B cell (primary cell): ENCODE measurements at regions of chr17 and their contacts with region 1.

Region 1: GRCh38 chr17:48678141-48678971 is 44.0 kb downstream of the PRAC1 start:
- DNase-seq: peak; percentile 78
- ATAC-seq: peak; percentile 81
- H3K4me3 ChIP-seq: no peak overlapping the region
- H3K4me3 Mint-ChIP-seq: no peak overlapping the region
- H3K27ac ChIP-seq: no peak overlapping the region
- H3K27ac Mint-ChIP-seq: no peak overlapping the region
- H3K4me1 ChIP-seq: peaks cover 0 to 9% of the 10 kb centered on the region in 2 donors
- H3K4me1 Mint-ChIP-seq: peaks cover 2% of the 10 kb centered on the region
- H3K27me3 ChIP-seq: peaks cover 0 to 41% (median 18%) of the 10 kb centered on the region in 4 experiments
- H3K27me3 Mint-ChIP-seq: peaks cover 49% of the 10 kb centered on the region
- CTCF ChIP-seq: peak; percentile 97

Region 2: GRCh38 chr17:46922804-46923635 is 1755.3 kb before region 1 on chr17 and contains the start of gene GOSR2:
- CTCF ChIA-PET with region 1: no interaction called
- POLR2A ChIA-PET with region 1: no interaction called
- intact Hi-C with region 1: no loop called
- DNase-seq: peak; percentile 98
- ATAC-seq: peak; percentile 94
- H3K4me3 ChIP-seq: peak within 1 kb of the TSS; percentile 87 to 98 (median 97)
- H3K4me3 Mint-ChIP-seq: peak within 1 kb of the TSS; percentile 98
- H3K27ac ChIP-seq: peak within 1 kb of the TSS; percentile 94 to 98
- H3K27ac Mint-ChIP-seq: peak within 1 kb of the TSS; percentile 100
- H3K4me1 ChIP-seq: peaks cover 16% of the 10 kb centered on the region in 2 donors
- H3K4me1 Mint-ChIP-seq: peaks cover 55% of the 10 kb centered on the region
- H3K27me3 ChIP-seq: no peaks in the 10 kb centered on the region
- H3K27me3 Mint-ChIP-seq: no peaks in the 10 kb centered on the region
- CTCF ChIP-seq: no peak
- total RNA-seq, gene GOSR2: 91.0 and 95.2 TPM in 2 replicates

Region 3: DNA sequence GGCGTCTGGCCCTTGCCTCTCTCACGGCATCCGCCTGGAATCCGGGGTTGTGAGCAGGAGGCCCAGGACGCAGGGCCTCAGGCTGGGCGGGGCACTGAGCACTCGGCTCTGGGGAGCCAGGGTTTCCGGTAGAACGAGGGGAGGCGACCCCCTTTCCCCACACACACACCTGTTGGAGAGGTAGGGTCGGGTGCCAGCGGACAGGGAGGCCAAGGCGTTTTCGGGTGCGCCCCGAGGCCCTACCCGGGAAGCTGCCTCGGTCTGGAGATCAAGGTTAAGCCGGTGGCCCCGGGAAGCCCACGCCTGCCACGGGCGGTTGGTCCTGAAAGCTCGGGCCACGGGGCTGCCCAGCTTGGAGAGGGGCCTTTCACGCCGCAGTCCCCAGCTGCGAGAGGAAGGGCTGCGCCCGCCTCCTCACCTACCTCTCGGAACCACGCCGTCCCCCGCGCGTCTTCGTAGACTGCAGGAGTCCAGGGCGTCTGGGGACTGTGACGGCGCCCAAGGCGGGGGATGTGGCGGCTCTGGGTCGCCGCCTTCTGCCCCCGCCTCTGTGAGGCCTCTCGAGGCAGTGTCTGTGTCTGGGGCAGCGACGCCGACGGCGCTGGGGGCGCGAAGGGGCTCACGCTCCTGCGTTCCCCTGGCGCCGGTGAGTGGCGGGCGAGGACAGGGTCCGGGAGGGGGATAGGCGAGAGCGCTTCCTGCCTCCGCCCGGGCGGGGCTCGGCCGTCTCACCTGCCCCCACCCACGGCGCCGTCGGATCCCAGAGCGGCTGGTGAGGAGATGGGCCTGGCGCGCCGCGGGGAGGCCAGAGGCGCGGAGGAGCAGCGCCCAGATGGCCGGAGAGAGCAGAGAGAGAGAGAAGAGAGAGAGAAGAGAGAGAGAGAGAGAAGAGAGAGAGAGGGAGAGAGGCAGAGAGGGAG is 31.9 kb before region 1 on chr17:
- CTCF ChIA-PET with region 1: no interaction called
- POLR2A ChIA-PET with region 1: no interaction called
- intact Hi-C with region 1: no loop called
- DNase-seq: peak; percentile 43
- ATAC-seq: peak; percentile 53
- H3K4me3 ChIP-seq: peak overlapping the region in 3 of 5 experiments; percentile 61 to 71 (median 69)
- H3K4me3 Mint-ChIP-seq: peak overlapping the region; percentile 83
- H3K27ac ChIP-seq: no peak overlapping the region
- H3K27ac Mint-ChIP-seq: no peak overlapping the region
- H3K4me1 ChIP-seq: peaks cover 33 to 34% of the 10 kb centered on the region in 2 donors
- H3K4me1 Mint-ChIP-seq: peaks cover 31% of the 10 kb centered on the region
- H3K27me3 ChIP-seq: peaks cover 0 to 68% (median 40%) of the 10 kb centered on the region in 4 experiments
- H3K27me3 Mint-ChIP-seq: peaks cover 63% of the 10 kb centered on the region
- CTCF ChIP-seq: no peak

Region 4: DNA sequence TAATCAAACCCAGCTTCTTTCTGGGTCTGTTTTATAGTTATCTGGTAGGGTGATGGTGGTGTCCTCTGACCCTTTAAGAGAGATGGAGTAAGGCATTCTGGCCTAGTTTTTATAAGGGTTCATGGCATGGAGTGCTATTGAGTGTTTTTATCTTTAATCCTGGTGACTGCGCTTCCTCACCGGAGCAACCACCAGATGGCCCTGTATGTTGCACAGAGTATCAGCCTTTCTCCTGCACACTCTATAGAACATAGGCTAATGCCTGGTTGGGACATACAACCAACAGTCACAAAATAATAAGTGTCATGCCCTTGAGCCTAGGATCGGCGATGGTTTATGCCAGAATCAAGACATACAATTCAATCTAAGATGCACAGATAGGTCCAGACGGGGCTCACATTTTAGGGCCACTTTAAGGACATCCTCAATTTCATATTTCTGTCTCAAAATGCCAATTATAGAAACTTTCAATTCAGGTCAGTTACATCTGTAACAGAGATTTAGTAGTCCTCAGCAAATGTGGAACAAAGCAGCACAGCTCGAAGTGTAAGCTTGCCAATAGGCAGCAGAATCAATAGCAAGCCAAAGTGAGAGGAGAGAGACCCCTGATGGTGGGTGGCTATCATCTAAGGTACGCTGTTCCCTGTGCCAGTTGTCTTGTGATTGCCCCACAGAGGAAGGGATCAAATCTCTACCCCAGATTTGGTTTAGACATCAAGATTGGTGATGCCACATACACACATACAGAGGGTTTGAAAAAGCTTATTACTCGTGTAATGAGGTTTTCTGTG is 15.0 kb before region 1 on chr17:
- CTCF ChIA-PET with region 1: interaction called, 11 read pairs
- POLR2A ChIA-PET with region 1: no interaction called
- intact Hi-C with region 1: no loop called
- DNase-seq: no peak
- ATAC-seq: no peak
- H3K4me3 ChIP-seq: no peak overlapping the region
- H3K4me3 Mint-ChIP-seq: no peak overlapping the region
- H3K27ac ChIP-seq: no peak overlapping the region
- H3K27ac Mint-ChIP-seq: no peak overlapping the region
- H3K4me1 ChIP-seq: no peaks in the 10 kb centered on the region
- H3K4me1 Mint-ChIP-seq: no peaks in the 10 kb centered on the region
- H3K27me3 ChIP-seq: peaks cover 0 to 13% (median 4%) of the 10 kb centered on the region in 4 experiments
- H3K27me3 Mint-ChIP-seq: peaks cover 44% of the 10 kb centered on the region
- CTCF ChIP-seq: no peak

Region 5: DNA sequence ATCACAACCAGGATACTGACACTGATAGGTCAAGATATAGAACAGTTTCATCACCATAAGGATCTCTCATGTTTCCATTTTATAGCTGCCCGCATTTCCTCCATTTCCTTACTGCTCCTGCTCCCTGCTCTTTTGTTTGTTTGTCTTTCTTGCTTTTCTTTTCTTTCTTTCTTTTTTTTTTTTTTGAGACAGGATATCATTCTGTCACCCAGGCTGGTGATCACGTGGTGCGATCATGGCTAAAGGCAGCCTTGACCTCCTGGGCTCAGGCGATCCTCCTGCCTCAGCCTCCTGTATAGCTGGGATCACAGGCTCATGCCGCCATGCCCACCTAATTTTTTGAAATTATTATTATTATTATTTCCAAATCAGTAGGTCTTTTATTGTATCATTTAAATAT is 12.3 kb after region 1 on chr17:
- CTCF ChIA-PET with region 1: interaction called, 29 read pairs
- POLR2A ChIA-PET with region 1: no interaction called
- intact Hi-C with region 1: no loop called
- DNase-seq: no peak
- ATAC-seq: no peak
- H3K4me3 ChIP-seq: no peak overlapping the region
- H3K4me3 Mint-ChIP-seq: no peak overlapping the region
- H3K27ac ChIP-seq: no peak overlapping the region
- H3K27ac Mint-ChIP-seq: no peak overlapping the region
- H3K4me1 ChIP-seq: no peaks in the 10 kb centered on the region
- H3K4me1 Mint-ChIP-seq: no peaks in the 10 kb centered on the region
- H3K27me3 ChIP-seq: peaks cover 0 to 9% (median 4%) of the 10 kb centered on the region in 4 experiments
- H3K27me3 Mint-ChIP-seq: peaks cover 21% of the 10 kb centered on the region
- CTCF ChIP-seq: no peak

Region 6: GRCh38 chr17:48791128-48792032 is 113.0 kb after region 1 on chr17:
- CTCF ChIA-PET with region 1: interaction called, 15 read pairs
- POLR2A ChIA-PET with region 1: no interaction called
- intact Hi-C with region 1: loop called (anchors 5 kb)
- DNase-seq: peak; percentile 32
- ATAC-seq: no peak
- H3K4me3 ChIP-seq: no peak overlapping the region
- H3K4me3 Mint-ChIP-seq: no peak overlapping the region
- H3K27ac ChIP-seq: no peak overlapping the region
- H3K27ac Mint-ChIP-seq: no peak overlapping the region
- H3K4me1 ChIP-seq: peaks cover 0 to 10% of the 10 kb centered on the region in 2 donors
- H3K4me1 Mint-ChIP-seq: peaks cover 3% of the 10 kb centered on the region
- H3K27me3 ChIP-seq: peaks cover 0 to 20% (median 3%) of the 10 kb centered on the region in 4 experiments
- H3K27me3 Mint-ChIP-seq: peaks cover 47% of the 10 kb centered on the region
- CTCF ChIP-seq: peak; percentile 33

Region 7: DNA sequence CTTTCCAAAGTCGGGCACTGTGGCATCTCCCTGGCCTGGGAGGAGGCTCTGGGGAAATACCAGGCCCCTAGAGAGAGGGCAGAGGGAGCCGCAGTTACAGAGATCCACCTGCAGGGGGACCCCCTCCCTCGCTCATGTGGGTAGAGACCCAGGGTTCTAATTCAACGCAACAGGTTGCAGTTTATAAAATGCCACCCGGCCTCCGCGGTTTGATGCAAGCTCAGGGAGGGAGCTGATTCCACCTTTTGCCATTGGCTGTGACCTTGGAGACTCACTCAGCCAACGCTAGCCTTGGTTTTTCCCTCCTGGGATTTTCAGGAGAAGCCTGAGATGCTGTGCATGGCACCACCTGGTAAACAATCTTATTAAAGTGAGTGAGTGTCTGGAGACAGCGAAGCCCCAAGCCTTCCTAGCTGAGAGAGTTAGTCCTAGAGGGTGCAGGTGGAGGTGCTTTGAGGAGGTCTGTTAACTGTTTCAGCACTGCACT is 126.6 kb after region 1 on chr17:
- CTCF ChIA-PET with region 1: interaction called, 19 read pairs
- POLR2A ChIA-PET with region 1: no interaction called
- intact Hi-C with region 1: no loop called
- DNase-seq: peak; percentile 72
- ATAC-seq: peak; percentile 93
- H3K4me3 ChIP-seq: no peak overlapping the region
- H3K4me3 Mint-ChIP-seq: no peak overlapping the region
- H3K27ac ChIP-seq: no peak overlapping the region
- H3K27ac Mint-ChIP-seq: no peak overlapping the region
- H3K4me1 ChIP-seq: peaks cover 2 to 3% of the 10 kb centered on the region in 2 donors
- H3K4me1 Mint-ChIP-seq: no peaks in the 10 kb centered on the region
- H3K27me3 ChIP-seq: peaks cover 0 to 9% (median 4%) of the 10 kb centered on the region in 4 experiments
- H3K27me3 Mint-ChIP-seq: peaks cover 14% of the 10 kb centered on the region
- CTCF ChIP-seq: peak; percentile 95